Activated CD8-positive, alpha-beta T cell treated with anti-CD3 and anti-CD28 coated beads for 36 hours (primary cell): ENCODE measurements at regions of chr11 and their contacts with region 1.

Region 1: DNA sequence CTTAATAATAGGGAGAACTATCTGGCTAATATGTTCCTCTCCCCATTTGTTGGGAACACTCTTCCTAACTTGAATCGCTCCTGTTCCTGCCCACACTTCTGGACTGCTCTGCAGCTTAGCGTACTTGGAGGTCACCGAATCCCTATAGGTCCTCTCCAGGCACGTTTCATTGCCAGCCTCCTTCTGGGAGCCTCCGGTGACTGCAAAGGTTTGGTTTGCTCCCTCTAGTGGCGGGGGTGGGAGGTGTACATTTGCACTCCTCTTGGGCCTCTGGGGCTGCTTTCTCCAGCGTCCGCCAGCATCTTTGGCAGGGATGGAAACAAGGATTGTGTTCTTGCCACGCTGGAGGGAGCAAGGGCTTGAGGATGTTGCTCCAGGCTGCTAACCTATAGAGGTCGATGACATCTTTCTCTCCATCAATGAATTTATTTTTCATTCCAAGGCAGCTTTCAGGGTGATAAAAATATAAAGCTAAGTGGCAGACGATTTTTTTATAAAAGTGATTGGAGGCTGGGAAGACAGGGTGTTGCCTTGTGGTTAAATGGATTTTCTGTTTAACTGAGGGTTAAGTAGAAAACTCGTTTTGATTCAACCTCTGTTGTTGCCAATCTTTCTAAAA is 48.7 kb downstream of the TSPAN18 start:
- DNase-seq: peak; percentile 74
- ATAC-seq: peak; percentile 77
- H3K4me3 Mint-ChIP-seq: no peak overlapping the region
- H3K27ac Mint-ChIP-seq: no peak overlapping the region
- H3K4me1 Mint-ChIP-seq: no peaks in the 10 kb centered on the region
- H3K27me3 Mint-ChIP-seq: peaks cover 4% of the 10 kb centered on the region
- CTCF ChIP-seq: peak; percentile 81

Region 2: DNA sequence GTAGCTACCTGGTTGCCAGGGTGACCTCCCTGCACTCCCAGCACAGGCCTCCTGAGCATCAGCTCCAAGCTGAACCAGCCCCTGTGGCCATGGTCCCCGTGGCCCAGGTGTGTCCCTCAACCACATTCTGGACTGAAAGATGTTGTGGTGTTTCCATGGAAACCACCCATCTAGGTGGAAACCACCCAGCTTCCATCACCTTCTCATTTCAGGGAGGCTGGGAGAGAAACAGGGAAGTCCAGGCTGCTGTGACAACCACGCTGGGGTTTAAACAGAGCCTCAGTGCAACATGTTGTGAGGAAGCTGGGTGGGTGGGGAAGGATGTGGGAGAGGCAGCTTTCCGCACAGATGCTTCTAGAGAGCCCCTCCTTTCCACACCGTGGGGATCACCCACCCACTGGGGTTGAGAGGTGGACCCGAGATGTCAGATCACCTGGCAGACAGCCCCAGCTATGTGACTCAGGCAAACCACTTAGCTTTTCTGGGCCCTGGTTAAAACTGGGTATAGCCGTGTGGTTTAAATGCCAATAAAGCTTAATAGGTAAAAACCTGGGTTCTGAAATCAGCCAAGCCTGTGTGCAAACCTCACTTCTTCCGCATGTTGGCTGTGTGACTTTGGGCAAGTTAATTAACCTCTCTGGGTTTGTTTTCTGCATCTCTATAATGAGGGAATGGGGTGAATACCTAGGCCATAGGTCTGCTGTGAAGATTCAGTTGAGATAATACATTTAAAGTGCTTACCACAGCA is 163.6 kb before region 1 on chr11:
- CTCF ChIA-PET with region 1: interaction called, 15 read pairs
- POLR2A ChIA-PET with region 1: no interaction called
- intact Hi-C with region 1: no loop called
- DNase-seq: peak; percentile 90
- ATAC-seq: peak; percentile 79
- H3K4me3 Mint-ChIP-seq: no peak overlapping the region
- H3K27ac Mint-ChIP-seq: peak overlapping the region; percentile 89
- H3K4me1 Mint-ChIP-seq: peaks cover 68% of the 10 kb centered on the region
- H3K27me3 Mint-ChIP-seq: no peaks in the 10 kb centered on the region
- CTCF ChIP-seq: no peak

Region 3: GRCh38 chr11:44750551-44751465 is 24.7 kb before region 1 on chr11:
- CTCF ChIA-PET with region 1: interaction called, 13 read pairs
- POLR2A ChIA-PET with region 1: no interaction called
- intact Hi-C with region 1: no loop called
- DNase-seq: no peak
- ATAC-seq: no peak
- H3K4me3 Mint-ChIP-seq: no peak overlapping the region
- H3K27ac Mint-ChIP-seq: no peak overlapping the region
- H3K4me1 Mint-ChIP-seq: peaks cover 9% of the 10 kb centered on the region
- H3K27me3 Mint-ChIP-seq: no peaks in the 10 kb centered on the region
- CTCF ChIP-seq: no peak

Region 4: GRCh38 chr11:44785856-44786606 is 10.6 kb after region 1 on chr11:
- CTCF ChIA-PET with region 1: interaction called, 28 read pairs
- POLR2A ChIA-PET with region 1: no interaction called
- intact Hi-C with region 1: no loop called
- DNase-seq: peak; percentile 7
- ATAC-seq: peak; percentile 42
- H3K4me3 Mint-ChIP-seq: no peak overlapping the region
- H3K27ac Mint-ChIP-seq: no peak overlapping the region
- H3K4me1 Mint-ChIP-seq: no peaks in the 10 kb centered on the region
- H3K27me3 Mint-ChIP-seq: no peaks in the 10 kb centered on the region
- CTCF ChIP-seq: peak; percentile 26

Region 5: DNA sequence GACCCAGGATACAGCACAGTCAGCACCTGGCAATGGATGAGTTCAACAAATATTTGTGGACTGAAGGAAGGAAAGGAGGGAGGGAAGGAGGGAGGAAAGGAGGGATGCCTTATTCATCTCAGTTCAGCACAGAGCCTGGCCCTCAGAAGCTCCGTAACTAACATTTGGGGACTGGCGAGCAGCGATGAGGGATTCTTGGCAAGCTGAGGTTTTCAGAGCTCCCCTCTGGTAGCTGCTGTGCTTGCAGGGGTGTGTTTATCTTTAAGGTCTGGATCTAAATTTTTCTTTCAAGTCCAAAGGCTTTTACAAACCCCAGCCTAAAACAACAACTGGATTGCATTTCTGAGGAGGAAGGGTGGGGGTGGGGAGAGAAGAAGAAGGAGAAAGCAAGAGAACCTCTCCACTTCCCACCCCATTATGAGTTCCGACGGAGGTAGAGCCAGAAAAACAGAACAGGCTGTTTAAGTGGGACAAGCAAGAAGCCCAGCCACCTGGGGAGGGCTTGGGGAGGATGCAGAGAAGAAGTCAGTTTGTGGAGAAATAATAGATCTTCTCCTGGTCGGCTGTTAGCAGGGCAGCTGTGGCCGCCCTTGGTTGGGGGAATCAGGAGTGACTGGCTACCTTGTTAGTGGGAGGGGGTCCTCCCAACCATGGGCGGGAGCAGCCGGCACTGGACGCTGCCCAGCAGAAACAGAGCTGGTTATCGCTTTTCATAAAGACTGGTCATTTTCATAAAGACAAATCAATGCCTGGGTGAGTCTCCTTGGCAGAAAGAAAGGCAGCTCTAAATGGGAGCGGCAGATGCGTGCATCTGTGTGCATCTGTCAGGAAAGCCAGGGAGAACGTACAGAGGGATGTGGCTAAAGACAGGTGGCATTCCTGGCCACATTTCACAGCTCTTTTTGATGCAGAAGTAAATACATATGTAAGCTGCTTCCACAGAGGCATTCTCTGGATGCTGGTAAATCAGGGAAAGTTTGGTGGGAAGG is 29.3 kb after region 1 on chr11:
- CTCF ChIA-PET with region 1: interaction called, 12 read pairs
- POLR2A ChIA-PET with region 1: no interaction called
- intact Hi-C with region 1: no loop called
- DNase-seq: no peak
- ATAC-seq: no peak
- H3K4me3 Mint-ChIP-seq: no peak overlapping the region
- H3K27ac Mint-ChIP-seq: no peak overlapping the region
- H3K4me1 Mint-ChIP-seq: no peaks in the 10 kb centered on the region
- H3K27me3 Mint-ChIP-seq: no peaks in the 10 kb centered on the region
- CTCF ChIP-seq: no peak

Region 6: GRCh38 chr11:44911029-44911814 is 135.7 kb after region 1 on chr11:
- CTCF ChIA-PET with region 1: interaction called, 22 read pairs
- POLR2A ChIA-PET with region 1: no interaction called
- intact Hi-C with region 1: no loop called
- DNase-seq: peak; percentile 94
- ATAC-seq: peak; percentile 89
- H3K4me3 Mint-ChIP-seq: no peak overlapping the region
- H3K27ac Mint-ChIP-seq: no peak overlapping the region
- H3K4me1 Mint-ChIP-seq: peaks cover 4% of the 10 kb centered on the region
- H3K27me3 Mint-ChIP-seq: peaks cover 2% of the 10 kb centered on the region
- CTCF ChIP-seq: peak; percentile 68